Ascending aorta (tissue), 2 donors: ENCODE measurements at regions of chr16 and their contacts with region 1.

Region 1: GRCh38 chr16:56673921-56674320 is 4.3 kb downstream of the MT1H start:
- DNase-seq: peak in 1 of 2 donors; percentile 75
- H3K4me3 ChIP-seq: no peak overlapping the region
- H3K27ac ChIP-seq: no peak overlapping the region
- H3K4me1 ChIP-seq: peaks cover 0 to 7% of the 10 kb centered on the region in 2 donors
- H3K27me3 ChIP-seq: no peaks in the 10 kb centered on the region
- CTCF ChIP-seq: peak; percentile 46 to 71 (median 62)

Region 2: DNA sequence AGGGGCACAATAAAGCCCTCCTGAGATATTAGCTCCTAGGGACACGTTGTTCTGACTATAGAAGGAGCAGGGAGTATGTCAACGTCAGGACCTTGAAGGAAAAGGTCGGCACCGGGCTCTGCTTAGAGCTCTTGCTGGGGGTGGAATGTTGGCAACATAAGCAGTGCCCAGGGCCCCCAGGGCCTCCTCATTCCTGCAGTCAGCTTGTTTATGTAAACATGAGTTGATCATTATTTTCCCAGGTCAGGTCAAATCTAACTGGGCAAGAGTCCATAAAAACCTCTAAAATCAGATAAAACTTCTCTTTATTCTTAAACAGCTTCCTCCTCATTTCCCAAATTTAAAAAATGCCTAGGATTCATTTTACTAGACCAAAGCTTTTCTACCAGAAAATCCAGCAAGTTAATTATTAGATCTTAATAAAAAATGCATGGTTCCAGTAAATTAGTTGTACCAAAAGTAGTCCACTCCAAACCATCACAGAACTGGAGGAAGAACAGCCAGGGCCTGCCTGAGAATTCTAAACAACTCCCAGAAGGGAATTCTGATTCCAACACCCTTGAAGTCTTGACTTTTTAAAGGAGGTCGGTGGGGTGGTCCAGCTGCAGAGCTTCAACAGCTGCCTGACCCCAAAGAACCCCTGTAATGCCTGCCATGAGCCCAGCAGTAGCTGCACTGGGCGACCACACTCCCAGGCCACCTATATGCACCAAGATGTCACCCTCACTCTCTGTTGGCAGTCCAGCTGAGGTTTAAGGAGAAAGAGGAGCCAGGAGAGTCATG is 302.9 kb before region 1 on chr16:
- intact Hi-C with region 1: no loop called
- DNase-seq: no peak
- H3K4me3 ChIP-seq: no peak overlapping the region
- H3K27ac ChIP-seq: peak overlapping the region in 1 of 2 donors; percentile 26
- H3K4me1 ChIP-seq: peaks cover 3% of the 10 kb centered on the region in 2 donors
- H3K27me3 ChIP-seq: no peaks in the 10 kb centered on the region
- CTCF ChIP-seq: no peak

Region 3: DNA sequence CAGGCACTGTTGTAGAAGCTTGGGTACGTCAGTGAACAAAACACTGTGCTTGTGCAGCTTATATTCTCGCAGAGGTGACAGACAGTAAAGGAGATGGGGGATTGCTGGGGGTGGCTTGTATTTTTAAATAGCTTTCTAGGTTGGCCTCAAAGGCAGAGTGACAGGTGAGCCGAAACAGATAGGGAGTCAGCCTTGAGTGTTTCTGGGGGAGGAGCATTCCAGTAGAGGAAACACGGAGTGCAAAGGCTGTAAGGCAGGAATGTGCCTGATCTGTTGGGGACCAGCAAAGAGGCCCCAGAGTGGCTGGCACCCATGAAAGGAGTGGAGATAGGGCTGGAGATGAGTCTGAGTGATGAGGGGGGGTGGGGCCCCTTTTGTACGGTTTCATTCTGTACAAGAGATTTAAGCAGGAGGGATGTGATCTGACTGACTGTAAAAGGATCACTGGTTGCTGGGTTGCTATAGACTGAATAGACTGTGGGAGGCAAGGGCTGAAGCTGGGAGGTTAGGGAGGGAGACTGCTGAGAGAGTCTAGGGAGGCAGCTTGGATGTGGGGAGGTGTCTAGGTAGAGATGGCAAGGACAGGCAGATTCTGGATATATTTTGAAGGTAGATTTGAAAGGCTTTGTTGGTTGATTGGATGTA is 71.2 kb after region 1 on chr16:
- intact Hi-C with region 1: no loop called
- DNase-seq: no peak
- H3K4me3 ChIP-seq: no peak overlapping the region
- H3K27ac ChIP-seq: peak overlapping the region; percentile 67 to 74
- H3K4me1 ChIP-seq: peaks cover 7 to 39% of the 10 kb centered on the region in 2 donors
- H3K27me3 ChIP-seq: no peaks in the 10 kb centered on the region
- CTCF ChIP-seq: no peak

Region 4: GRCh38 chr16:56789360-56789759 is 115.4 kb after region 1 on chr16:
- intact Hi-C with region 1: loop called (anchors 1 kb)
- DNase-seq: no peak
- H3K4me3 ChIP-seq: no peak overlapping the region
- H3K27ac ChIP-seq: no peak overlapping the region
- H3K4me1 ChIP-seq: no peaks in the 10 kb centered on the region
- H3K27me3 ChIP-seq: no peaks in the 10 kb centered on the region
- CTCF ChIP-seq: peak in 2 of 3 experiments; percentile 22 to 52